ENCODE measurements at regions of chr5 and their contacts with region 1.

Region 1: GRCh38 chr5:180047667-180048066 is 23.9 kb downstream of the RNF130 start:
- DNase-seq: no peak
- H3K4me3 ChIP-seq: no peak overlapping the region
- H3K27ac ChIP-seq: peak overlapping the region; percentile 87 to 93
- H3K4me1 ChIP-seq: peaks cover 22 to 35% (median 32%) of the 10 kb centered on the region in 4 experiments
- H3K27me3 ChIP-seq: no peaks in the 10 kb centered on the region

Region 2: GRCh38 chr5:180021805-180022217 is 25.9 kb before region 1 on chr5:
- CTCF ChIA-PET with region 1: no interaction called
- POLR2A ChIA-PET with region 1: no interaction called
- DNase-seq: peak in 1 of 3 donors; percentile 15
- H3K4me3 ChIP-seq: no peak overlapping the region
- H3K27ac ChIP-seq: no peak overlapping the region
- H3K4me1 ChIP-seq: peaks cover 3 to 11% (median 9%) of the 10 kb centered on the region in 4 experiments
- H3K27me3 ChIP-seq: no peaks in the 10 kb centered on the region

Region 3: DNA sequence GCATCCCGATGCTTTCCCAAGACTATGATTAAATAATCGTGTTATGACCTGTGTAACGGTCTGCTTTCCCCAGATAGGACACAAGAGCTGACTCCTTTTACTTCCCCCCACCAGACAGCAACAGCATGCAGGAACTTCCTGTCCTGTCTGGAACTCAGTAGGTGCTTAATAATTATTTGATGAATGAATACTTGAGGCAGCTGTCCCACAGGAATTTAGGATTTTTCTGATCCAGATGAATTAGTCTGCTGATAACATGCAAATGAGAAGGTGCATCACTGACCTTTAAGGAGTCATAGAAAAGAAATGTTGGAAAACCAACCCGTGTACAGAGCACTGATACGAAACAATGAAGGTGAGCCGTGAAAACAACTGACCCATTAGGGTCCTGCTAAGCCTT is 11.7 kb after region 1 on chr5:
- CTCF ChIA-PET with region 1: interaction called, 14 read pairs
- POLR2A ChIA-PET with region 1: no interaction called
- DNase-seq: no peak
- H3K4me3 ChIP-seq: no peak overlapping the region
- H3K27ac ChIP-seq: no peak overlapping the region
- H3K4me1 ChIP-seq: peaks cover 0 to 7% (median 3%) of the 10 kb centered on the region in 4 experiments
- H3K27me3 ChIP-seq: no peaks in the 10 kb centered on the region

Region 4: GRCh38 chr5:180563994-180564393 is 516.3 kb after region 1 on chr5:
- CTCF ChIA-PET with region 1: no interaction called
- POLR2A ChIA-PET with region 1: no interaction called
- DNase-seq: no peak
- H3K4me3 ChIP-seq: no peak overlapping the region
- H3K27ac ChIP-seq: no peak overlapping the region
- H3K4me1 ChIP-seq: no peaks in the 10 kb centered on the region
- H3K27me3 ChIP-seq: no peaks in the 10 kb centered on the region